ENCODE measurements at regions of chr10 and their contacts with region 1.

Region 1: GRCh38 chr10:98170249-98171117 is 36.0 kb downstream of the R3HCC1L start:
- DNase-seq: no peak
- ATAC-seq: peak; percentile 70
- H3K4me3 ChIP-seq: no peak overlapping the region
- H3K27ac ChIP-seq: no peak overlapping the region
- H3K4me1 ChIP-seq: peaks cover 0 to 2% of the 10 kb centered on the region in 2 donors
- H3K27me3 ChIP-seq: no peaks in the 10 kb centered on the region

Region 2: DNA sequence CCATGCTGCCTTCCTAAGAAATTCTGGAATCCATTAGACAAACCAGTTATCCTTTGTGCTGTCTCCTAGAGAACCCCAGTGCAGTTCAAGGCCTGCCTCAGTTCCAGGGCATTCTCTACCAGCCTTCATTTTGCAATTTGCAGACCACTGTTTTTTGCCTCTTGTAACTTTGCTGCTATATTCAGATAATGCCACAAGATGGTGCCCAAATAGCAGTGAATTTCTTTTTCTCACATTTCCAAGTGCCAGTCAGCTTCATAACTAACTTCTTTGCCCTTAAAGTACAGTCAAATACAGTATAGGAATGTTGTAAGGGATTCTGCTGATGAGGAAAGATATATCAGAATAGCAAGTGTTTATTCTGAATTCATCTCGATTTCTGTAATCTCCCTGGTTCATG is 72.3 kb after region 1 on chr10:
- intact Hi-C with region 1: loop called in 1 of 2 experiments (anchors 10 kb)
- DNase-seq: no peak
- ATAC-seq: no peak
- H3K4me3 ChIP-seq: no peak overlapping the region
- H3K27ac ChIP-seq: no peak overlapping the region
- H3K4me1 ChIP-seq: peaks cover 2 to 5% of the 10 kb centered on the region in 2 donors
- H3K27me3 ChIP-seq: no peaks in the 10 kb centered on the region